ENCODE measurements at regions of chr1 and their contacts with region 1.

Region 1: DNA sequence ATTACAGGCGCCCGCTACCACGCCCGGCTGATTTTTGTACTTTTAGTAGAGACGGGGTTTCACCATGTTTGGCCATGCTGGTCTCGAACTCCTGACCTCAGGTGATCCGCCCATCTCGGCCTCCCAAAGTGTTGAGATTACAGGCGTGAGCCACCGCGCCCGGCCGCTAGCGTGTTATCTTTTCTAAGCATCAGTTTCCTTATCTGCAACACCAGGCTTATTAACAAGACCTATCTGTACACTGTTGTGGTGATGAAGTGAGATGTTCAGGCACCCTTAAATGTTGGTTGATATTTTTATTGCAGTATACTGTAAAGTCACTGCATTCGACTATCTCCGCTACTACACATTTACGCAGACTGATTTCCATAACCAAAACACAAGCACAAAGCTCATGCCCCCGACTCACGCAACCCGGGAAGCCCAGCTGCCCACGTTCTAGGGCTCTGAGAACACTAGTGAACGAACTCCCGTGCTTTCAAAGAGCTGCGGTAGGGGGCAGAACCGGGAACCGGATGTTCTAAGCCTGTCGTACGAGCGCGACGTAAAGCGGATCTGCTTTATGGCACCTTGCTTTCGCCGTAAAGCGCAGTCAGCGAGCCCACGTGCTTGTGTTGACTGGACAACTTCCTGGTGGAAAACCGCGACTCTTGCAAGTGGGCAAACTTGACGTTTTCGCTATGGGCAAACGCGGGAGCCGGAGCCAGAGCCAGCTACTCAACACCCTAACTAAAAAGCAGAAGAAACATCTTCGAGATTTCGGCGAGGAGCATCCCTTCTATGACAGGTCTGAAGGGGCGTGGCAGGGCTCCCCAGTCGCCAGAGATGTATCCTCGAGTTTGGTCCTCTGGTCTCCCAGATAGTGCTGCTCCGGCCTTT is at the start of gene UTP25:
- DNase-seq: peak; percentile 98
- ATAC-seq: peak; percentile 93
- H3K4me3 Mint-ChIP-seq: peak within 1 kb of the TSS; percentile 76
- H3K27ac Mint-ChIP-seq: peak within 1 kb of the TSS; percentile 89
- H3K4me1 Mint-ChIP-seq: peaks cover 47% of the 10 kb centered on the region
- H3K27me3 Mint-ChIP-seq: peaks cover 4% of the 10 kb centered on the region
- CTCF ChIP-seq: peak; percentile 20
- total RNA-seq, gene UTP25: 8.9 to 9.5 TPM

Region 2: DNA sequence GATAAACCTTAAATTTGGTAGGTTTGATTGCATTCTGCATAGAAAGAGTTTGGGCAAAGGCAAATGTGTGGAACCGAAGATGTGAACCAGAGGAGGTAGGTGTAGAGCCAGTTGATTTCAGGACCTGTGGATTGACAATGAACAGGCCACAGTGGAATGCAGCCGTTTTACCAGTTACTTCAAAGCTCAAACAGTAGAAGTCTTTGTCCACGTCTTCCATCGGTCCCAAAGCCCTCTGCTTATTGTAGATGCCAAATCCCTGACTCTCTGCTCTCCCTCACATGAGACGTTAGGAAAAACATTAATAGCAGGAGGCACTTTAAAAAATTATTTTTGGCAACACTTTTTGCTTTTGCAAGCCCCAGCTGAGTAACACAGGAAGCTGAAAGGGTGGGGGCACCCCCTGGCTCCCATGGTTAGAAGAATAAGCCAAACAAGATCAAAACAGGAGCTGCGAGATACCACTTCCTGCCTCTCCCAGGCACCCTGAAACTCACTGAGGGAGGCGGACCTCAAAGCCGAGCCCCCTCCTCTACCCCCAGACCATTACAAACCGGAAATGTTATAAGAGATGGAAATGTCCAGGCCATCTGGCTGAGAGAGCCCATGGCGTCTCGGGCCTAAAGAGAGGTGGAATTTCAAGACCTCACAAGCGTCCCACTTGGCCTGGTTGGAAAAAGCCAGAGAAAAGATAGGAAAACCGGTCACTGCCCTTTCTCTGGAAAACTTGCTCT is 58.3 kb before region 1 on chr1:
- CTCF ChIA-PET with region 1: interaction called, 27 read pairs
- POLR2A ChIA-PET with region 1: interaction called, 18 read pairs
- intact Hi-C with region 1: loop called (anchors 5 kb)
- DNase-seq: peak; percentile 94
- ATAC-seq: peak; percentile 67
- H3K4me3 Mint-ChIP-seq: no peak overlapping the region
- H3K27ac Mint-ChIP-seq: no peak overlapping the region
- H3K4me1 Mint-ChIP-seq: peaks cover 39% of the 10 kb centered on the region
- H3K27me3 Mint-ChIP-seq: no peaks in the 10 kb centered on the region
- CTCF ChIP-seq: no peak

Region 3: DNA sequence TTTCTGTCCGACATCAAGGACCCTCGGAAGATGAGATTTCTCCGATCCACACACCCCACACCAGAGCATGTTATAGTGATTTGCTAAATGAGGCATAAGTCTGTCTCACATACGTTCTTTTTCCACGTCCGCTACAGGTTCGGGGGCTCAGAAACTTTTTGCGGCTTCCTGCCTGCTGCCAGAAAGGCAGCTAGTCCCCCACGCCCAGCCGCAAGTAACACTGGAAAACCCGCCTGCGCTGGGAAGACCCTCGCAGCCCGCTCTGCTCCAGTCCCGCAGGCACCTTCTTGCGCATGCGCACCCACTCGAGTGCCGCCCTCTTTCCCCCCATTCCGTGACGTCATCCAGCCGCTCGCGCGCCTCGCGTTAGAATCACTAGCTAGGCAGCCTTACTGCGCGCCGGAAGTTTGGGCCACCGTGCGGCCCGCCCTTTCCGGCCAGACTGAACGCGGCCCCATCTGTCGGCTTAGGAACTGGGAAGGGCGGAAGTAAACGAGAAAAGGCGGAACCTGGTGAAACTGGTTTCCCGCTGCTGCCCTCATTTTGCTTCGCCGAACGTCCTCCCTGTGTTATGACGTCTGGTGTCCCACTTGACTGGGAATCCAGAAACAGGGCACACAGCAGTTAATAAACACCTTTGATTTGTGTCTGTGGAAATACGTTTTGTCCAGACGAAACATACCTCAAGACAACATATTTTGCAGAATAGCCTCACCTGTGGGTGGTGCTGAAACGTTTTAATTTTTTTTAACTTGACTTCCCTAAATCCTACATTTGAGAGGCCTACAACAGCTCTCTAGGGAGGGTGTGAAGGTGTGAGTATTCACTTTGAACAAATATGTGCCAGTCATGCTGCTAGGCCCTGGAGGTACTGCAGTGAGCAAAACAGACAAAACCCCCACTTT is 43.1 kb before region 1 on chr1 and contains the start of gene C1orf74:
- CTCF ChIA-PET with region 1: interaction called, 45 read pairs
- POLR2A ChIA-PET with region 1: interaction called, 3 read pairs
- intact Hi-C with region 1: no loop called
- DNase-seq: peak; percentile 99
- ATAC-seq: peak; percentile 98
- H3K4me3 Mint-ChIP-seq: peak within 1 kb of the TSS; percentile 96
- H3K27ac Mint-ChIP-seq: peak within 1 kb of the TSS; percentile 96
- H3K4me1 Mint-ChIP-seq: peaks cover 39% of the 10 kb centered on the region
- H3K27me3 Mint-ChIP-seq: no peaks in the 10 kb centered on the region
- CTCF ChIP-seq: no peak
- total RNA-seq, gene C1orf74: 2.8 to 3.0 TPM

Region 4: GRCh38 chr1:209805875-209806760 is 21.5 kb before region 1 on chr1 and contains the start of gene IRF6:
- CTCF ChIA-PET with region 1: interaction called, 59 read pairs
- POLR2A ChIA-PET with region 1: interaction called, 4 read pairs
- intact Hi-C with region 1: no loop called
- DNase-seq: peak; percentile 79
- ATAC-seq: peak; percentile 94
- H3K4me3 Mint-ChIP-seq: peak within 1 kb of the TSS; percentile 77
- H3K27ac Mint-ChIP-seq: peak within 1 kb of the TSS; percentile 71
- H3K4me1 Mint-ChIP-seq: peaks cover 21% of the 10 kb centered on the region
- H3K27me3 Mint-ChIP-seq: peaks cover 3% of the 10 kb centered on the region
- CTCF ChIP-seq: no peak
- total RNA-seq, gene IRF6: 1.2 TPM

Region 5: GRCh38 chr1:209839875-209840491 is 12.4 kb after region 1 on chr1:
- CTCF ChIA-PET with region 1: interaction called, 47 read pairs
- POLR2A ChIA-PET with region 1: interaction called, 5 read pairs
- intact Hi-C with region 1: no loop called
- DNase-seq: peak; percentile 17
- ATAC-seq: peak; percentile 72
- H3K4me3 Mint-ChIP-seq: no peak overlapping the region
- H3K27ac Mint-ChIP-seq: peak overlapping the region; percentile 73
- H3K4me1 Mint-ChIP-seq: peaks cover 36% of the 10 kb centered on the region
- H3K27me3 Mint-ChIP-seq: no peaks in the 10 kb centered on the region
- CTCF ChIP-seq: no peak

Measured in activated CD8-positive, alpha-beta T cell treated with anti-CD3 and anti-CD28 coated beads for 36 hours (primary cell).